WTC11 (cell line): ENCODE measurements at regions of chr15 and their contacts with region 1.

Region 1: DNA sequence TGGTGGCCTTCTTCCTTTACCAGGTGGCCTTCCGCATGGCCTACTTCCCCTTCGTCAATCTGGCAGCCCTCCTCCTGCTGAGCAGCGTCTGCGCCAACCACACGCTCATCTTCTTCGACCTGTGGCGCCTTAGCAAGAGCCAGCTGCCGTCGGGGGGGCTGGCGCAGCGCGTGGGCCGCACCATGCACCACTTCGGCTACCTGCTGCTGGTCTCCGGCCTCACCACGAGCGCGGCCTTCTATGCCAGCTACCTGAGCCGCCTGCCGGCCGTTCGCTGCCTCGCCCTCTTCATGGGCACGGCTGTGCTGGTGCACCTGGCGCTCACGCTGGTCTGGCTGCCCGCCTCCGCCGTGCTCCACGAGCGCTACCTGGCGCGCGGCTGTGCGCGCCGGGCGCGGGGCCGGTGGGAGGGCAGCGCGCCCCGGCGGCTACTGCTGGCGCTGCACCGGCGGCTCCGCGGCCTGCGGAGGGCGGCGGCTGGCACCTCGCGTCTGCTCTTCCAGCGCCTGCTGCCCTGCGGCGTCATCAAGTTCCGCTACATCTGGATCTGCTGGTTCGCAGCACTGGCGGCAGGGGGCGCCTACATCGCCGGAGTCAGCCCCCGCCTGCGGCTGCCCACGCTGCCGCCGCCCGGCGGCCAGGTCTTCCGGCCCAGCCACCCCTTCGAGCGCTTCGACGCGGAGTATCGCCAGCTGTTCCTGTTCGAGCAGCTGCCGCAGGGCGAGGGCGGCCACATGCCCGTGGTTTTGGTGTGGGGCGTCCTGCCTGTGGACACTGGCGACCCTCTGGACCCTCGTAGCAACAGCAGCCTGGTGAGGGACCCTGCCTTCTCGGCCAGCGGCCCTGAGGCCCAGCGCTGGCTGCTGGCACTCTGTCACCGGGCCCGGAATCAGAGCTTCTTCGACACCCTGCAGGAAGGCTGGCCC is 9.9 kb downstream of the DISP2 start:
- DNase-seq: peak; percentile 90
- ATAC-seq: peak; percentile 89
- H3K4me3 Mint-ChIP-seq: peak overlapping the region; percentile 52
- H3K27ac Mint-ChIP-seq: no peak overlapping the region
- H3K4me1 Mint-ChIP-seq: peaks cover 21% of the 10 kb centered on the region
- H3K27me3 Mint-ChIP-seq: peaks cover 45% of the 10 kb centered on the region
- CTCF ChIP-seq: peak; percentile 77

Region 2: GRCh38 chr15:40098489-40099261 is 269.3 kb before region 1 on chr15:
- CTCF ChIA-PET with region 1: no interaction called
- POLR2A ChIA-PET with region 1: no interaction called
- DNase-seq: no peak
- ATAC-seq: peak; percentile 2; the same call in 1 of the 2 replicates
- H3K4me3 Mint-ChIP-seq: no peak overlapping the region
- H3K27ac Mint-ChIP-seq: peak overlapping the region; percentile 90; the same call in 1 of the 2 replicates
- H3K4me1 Mint-ChIP-seq: peaks cover 78% of the 10 kb centered on the region
- H3K27me3 Mint-ChIP-seq: no peaks in the 10 kb centered on the region
- CTCF ChIP-seq: no peak

Region 3: GRCh38 chr15:40150163-40150925 is 217.6 kb before region 1 on chr15:
- CTCF ChIA-PET with region 1: no interaction called
- POLR2A ChIA-PET with region 1: no interaction called
- DNase-seq: no peak
- ATAC-seq: no peak
- H3K4me3 Mint-ChIP-seq: no peak overlapping the region
- H3K27ac Mint-ChIP-seq: no peak overlapping the region
- H3K4me1 Mint-ChIP-seq: peaks cover 24% of the 10 kb centered on the region
- H3K27me3 Mint-ChIP-seq: no peaks in the 10 kb centered on the region
- CTCF ChIP-seq: no peak

Region 4: DNA sequence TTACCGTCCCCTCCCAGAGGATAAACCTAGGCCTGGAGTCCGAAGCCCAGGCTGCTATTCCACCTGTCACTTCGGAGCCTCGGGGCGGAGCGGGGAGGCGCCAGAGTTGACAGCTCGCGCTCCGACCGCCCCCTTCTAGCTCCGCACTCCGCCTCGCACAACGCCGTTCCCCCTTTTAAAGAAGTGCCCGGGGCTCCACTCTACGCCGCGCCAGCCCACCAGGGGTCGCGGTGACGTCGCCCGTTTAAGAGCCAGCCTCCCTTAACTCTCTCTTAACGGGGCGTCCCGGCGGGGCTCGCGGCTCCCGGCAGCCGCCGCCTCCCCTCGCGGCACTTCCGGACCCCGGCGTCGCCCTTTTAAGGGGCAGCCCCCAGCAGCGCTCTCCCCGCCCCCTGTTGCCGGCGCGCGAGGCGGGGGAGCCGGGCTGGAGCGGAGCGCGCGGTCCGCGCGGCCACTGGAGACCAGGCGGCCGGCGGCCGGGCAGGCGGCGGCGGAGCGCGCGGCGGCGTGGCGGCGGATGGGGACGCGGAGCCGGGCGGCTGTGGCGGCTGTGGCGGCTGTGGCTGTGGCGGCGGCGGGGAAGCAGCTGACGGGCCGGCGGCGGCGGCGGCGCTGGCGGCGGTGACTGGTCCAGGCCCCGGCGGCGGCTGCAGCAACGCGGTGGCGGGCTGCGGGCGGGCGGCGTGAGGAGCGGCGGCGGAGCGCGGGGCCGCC is 44.6 kb before region 1 on chr15 and contains the start of gene INAFM2:
- CTCF ChIA-PET with region 1: interaction called, 11 read pairs
- POLR2A ChIA-PET with region 1: no interaction called
- DNase-seq: peak; percentile 96
- ATAC-seq: peak; percentile 82
- H3K4me3 Mint-ChIP-seq: peak within 1 kb of the TSS; percentile 68
- H3K27ac Mint-ChIP-seq: no peak within 1 kb of the TSS
- H3K4me1 Mint-ChIP-seq: peaks cover 62% of the 10 kb centered on the region
- H3K27me3 Mint-ChIP-seq: peaks cover 25% of the 10 kb centered on the region
- CTCF ChIP-seq: no peak
- total RNA-seq, gene INAFM2: 28.2 to 34.2 TPM (median 30.3 TPM) in 3 replicates

Region 5: GRCh38 chr15:40382580-40383456 is 14.9 kb after region 1 on chr15 and contains the start of gene KNSTRN:
- CTCF ChIA-PET with region 1: interaction called, 17 read pairs
- POLR2A ChIA-PET with region 1: interaction called, 6 read pairs
- DNase-seq: peak; percentile 98
- ATAC-seq: peak; percentile 100
- H3K4me3 Mint-ChIP-seq: peak within 1 kb of the TSS; percentile 92
- H3K27ac Mint-ChIP-seq: peak within 1 kb of the TSS; percentile 98
- H3K4me1 Mint-ChIP-seq: peaks cover 22% of the 10 kb centered on the region
- H3K27me3 Mint-ChIP-seq: no peaks in the 10 kb centered on the region
- CTCF ChIP-seq: no peak
- total RNA-seq, gene KNSTRN: 58.7 to 73.4 TPM (median 64.6 TPM) in 3 replicates

Region 6: GRCh38 chr15:40405501-40406381 is 37.8 kb after region 1 on chr15 and contains the start of gene IVD:
- CTCF ChIA-PET with region 1: interaction called, 13 read pairs
- POLR2A ChIA-PET with region 1: no interaction called
- DNase-seq: peak; percentile 95
- ATAC-seq: peak; percentile 100
- H3K4me3 Mint-ChIP-seq: peak within 1 kb of the TSS; percentile 88
- H3K27ac Mint-ChIP-seq: peak within 1 kb of the TSS; percentile 96
- H3K4me1 Mint-ChIP-seq: peaks cover 17% of the 10 kb centered on the region
- H3K27me3 Mint-ChIP-seq: no peaks in the 10 kb centered on the region
- CTCF ChIP-seq: no peak
- total RNA-seq, gene IVD: 82.2 to 96.1 TPM (median 89.3 TPM) in 3 replicates

Region 7: DNA sequence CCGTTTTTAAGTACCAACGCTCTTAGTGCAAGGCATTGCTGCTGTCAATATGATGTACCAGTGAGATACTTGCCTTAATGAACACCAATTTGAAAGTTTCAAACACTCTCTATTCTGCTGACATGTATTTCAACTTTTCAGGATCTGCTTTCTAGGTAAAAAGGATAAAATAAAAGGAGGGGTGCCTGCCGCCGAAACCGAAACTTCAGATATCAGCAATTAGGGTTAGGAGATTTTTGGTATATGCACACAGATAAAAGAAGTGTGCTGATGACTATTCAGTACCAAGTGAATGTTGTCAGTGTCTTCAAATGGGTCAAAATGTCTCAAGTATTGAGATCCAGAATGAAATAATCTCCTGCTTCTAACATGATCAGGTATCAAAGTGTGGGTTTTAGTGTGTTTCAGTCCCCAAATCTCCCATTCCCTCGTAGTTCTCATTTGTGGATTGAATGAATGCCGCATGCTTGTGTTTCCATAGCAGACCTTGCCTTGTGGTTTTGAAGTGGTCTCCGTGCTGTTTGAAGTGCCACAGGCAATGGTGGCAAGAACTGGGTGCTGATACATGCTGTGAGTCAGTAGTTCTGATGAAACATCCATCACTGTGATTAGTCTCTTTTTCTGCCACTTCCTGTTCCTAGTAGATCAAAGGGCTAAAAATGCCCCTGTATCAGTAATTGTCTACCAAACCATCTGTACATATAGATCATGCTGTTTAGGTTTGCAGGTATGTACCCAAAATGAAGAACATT is 125.3 kb after region 1 on chr15:
- CTCF ChIA-PET with region 1: no interaction called
- POLR2A ChIA-PET with region 1: no interaction called
- DNase-seq: no peak
- ATAC-seq: no peak
- H3K4me3 Mint-ChIP-seq: no peak overlapping the region
- H3K27ac Mint-ChIP-seq: no peak overlapping the region
- H3K4me1 Mint-ChIP-seq: no peaks in the 10 kb centered on the region
- H3K27me3 Mint-ChIP-seq: peaks cover 6% of the 10 kb centered on the region; the same call in 1 of the 2 replicates
- CTCF ChIP-seq: no peak

Region 8: GRCh38 chr15:40623361-40623760 is 255.4 kb after region 1 on chr15:
- CTCF ChIA-PET with region 1: no interaction called
- POLR2A ChIA-PET with region 1: no interaction called
- DNase-seq: no peak
- ATAC-seq: no peak
- H3K4me3 Mint-ChIP-seq: no peak overlapping the region
- H3K27ac Mint-ChIP-seq: no peak overlapping the region
- H3K4me1 Mint-ChIP-seq: no peaks in the 10 kb centered on the region
- H3K27me3 Mint-ChIP-seq: no peaks in the 10 kb centered on the region
- CTCF ChIP-seq: no peak